Aorta (tissue), 5 donors: ENCODE measurements at regions of chr7 and their contacts with region 1.

Region 1: GRCh38 chr7:138865843-138866242 is 67.8 kb upstream of the ATP6V0A4 start:
- DNase-seq: no peak
- ATAC-seq: no peak
- H3K4me3 ChIP-seq: no peak overlapping the region
- H3K27ac ChIP-seq: no peak overlapping the region
- H3K4me1 ChIP-seq: no peaks in the 10 kb centered on the region
- H3K27me3 ChIP-seq: no peaks in the 10 kb centered on the region

Region 2: GRCh38 chr7:138924501-138925225 is 58.8 kb after region 1 on chr7:
- intact Hi-C with region 1: loop called in 1 of 2 experiments (anchors 10 kb)
- DNase-seq: no peak
- ATAC-seq: no peak
- H3K4me3 ChIP-seq: no peak overlapping the region
- H3K27ac ChIP-seq: no peak overlapping the region
- H3K4me1 ChIP-seq: no peaks in the 10 kb centered on the region
- H3K27me3 ChIP-seq: no peaks in the 10 kb centered on the region